GM12878 (cell line): ENCODE measurements at regions of chr15 and their contacts with region 1.

Region 1: DNA sequence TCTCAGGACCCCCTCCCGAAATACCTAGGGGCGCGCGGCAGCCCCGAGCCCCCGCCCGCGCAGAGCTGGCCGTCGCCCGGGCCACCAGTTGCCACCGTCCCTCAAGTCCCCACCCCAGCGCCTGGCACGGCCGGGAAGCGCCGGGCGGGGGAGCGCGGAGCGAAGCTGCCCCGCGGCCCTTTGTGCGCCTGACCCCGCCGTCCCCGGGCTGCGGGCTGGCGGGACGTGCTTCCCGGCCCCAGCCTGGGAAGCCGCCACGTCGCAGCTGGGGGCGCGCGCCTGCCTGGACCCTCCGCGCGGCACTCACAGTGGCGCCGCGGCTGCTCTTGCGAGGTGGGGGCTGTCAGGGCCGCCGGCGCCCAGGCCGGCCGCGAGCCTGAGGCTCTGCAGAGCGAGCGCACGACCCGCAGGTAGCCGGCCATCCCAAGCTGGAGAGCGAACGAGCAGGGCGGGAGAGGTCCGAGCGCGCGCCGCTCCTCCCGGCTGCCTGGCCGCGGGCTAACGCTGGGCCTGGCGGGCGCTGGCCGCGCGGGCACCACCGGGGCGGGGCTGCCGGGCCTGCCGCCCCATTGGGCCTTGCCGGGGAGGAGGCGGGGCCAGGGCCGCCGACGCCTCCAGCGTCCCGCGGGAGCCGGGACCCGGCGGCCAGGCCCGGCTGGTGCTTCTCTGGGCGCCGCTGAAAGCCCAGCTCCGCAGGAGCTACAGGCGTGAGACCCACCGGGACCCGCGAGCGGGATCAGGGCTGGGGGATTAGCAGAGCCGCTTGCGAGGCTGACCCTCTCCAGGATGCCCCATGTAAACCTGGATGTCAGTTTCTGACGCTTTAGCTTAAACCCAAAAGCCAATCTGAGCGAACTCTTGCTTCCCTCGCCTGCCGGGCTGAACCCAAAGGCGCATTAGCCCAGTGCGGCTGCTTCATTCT is at the start of gene IDH2:
- DNase-seq: no peak
- ATAC-seq: peak; percentile 76
- H3K4me3 ChIP-seq: peak within 1 kb of the TSS; percentile 79
- H3K27ac ChIP-seq: peak within 1 kb of the TSS; percentile 91
- H3K4me1 ChIP-seq: peaks cover 34% of the 10 kb centered on the region
- H3K27me3 ChIP-seq: no peaks in the 10 kb centered on the region
- CTCF ChIP-seq: no peak
- EP300 ChIP-seq: no peak
- POLR2A ChIP-seq: peak; percentile 91
- RAD21 ChIP-seq: no peak
- polyA plus RNA-seq, gene IDH2: 2.3 to 15.4 TPM

Region 2: DNA sequence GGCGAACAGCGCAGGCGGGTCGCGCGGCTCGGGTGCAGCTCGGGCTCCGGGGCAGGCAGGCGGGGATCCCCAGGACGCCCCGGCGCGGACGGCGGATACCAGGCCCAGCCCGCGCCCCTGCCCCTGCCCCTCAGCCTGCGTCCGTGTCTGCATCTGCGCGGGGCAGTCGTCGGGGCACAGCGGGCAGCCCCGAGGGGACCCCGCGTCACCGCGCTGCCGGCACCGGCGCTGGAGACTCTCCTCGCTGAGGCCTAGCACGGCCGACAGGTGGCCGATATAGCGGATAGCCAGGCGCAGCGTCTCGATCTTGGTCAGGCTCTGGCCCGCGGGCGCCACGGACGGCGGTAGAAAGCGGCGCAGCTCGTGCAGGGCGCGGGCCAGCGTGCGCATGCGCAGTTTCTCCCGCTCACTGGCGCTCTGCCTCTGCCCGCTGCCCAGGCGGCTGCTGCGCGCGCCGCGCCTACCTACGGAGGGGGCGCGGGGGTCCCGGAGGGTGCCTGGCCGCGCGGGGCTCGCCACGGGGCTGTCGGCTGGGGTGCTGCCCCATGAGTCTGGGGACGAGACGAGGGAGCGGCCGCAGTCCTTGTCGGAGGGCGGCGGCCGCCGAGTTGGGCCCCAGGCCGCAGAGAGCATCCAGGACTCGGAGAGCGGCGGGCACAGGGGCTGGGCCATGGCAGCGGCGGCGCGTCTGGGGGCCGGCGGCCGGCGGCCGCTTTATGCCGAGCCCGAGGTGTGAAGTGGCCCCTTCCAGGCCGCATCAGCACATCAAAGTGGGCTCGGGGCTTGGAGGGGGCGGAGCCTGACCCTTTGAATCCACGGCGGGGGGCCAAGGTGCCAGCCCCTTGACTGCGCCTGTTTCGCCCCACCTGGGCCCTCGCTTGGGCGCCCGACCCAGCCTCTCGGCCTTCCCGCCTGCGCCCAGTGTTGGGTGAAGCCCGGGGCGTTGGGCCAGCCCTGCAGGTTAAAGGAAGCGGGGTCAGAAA is 351.4 kb before region 1 on chr15 and contains the start of gene MESP1:
- CTCF ChIA-PET with region 1: no interaction called
- POLR2A ChIA-PET with region 1: no interaction called
- RAD21 ChIA-PET with region 1: interaction called, 4 read pairs
- SMC1A ChIA-PET with region 1: no interaction called
- in situ Hi-C with region 1: loop called (anchors 10 kb)
- intact Hi-C with region 1: no loop called
- DNase-seq: peak; percentile 51
- ATAC-seq: peak; percentile 98
- H3K4me3 ChIP-seq: peak within 1 kb of the TSS; percentile 65
- H3K27ac ChIP-seq: no peak within 1 kb of the TSS
- H3K4me1 ChIP-seq: peaks cover 9% of the 10 kb centered on the region
- H3K27me3 ChIP-seq: peaks cover 0 to 4% of the 10 kb centered on the region in 2 experiments; a peak in 2 of 4 replicates
- CTCF ChIP-seq: peak; percentile 52 to 76 (median 74)
- EP300 ChIP-seq: no peak
- POLR2A ChIP-seq: no peak; the same call in none of the 2 replicates
- RAD21 ChIP-seq: no peak; the same call in 1 of the 2 replicates
- polyA plus RNA-seq, gene MESP1: not detected

Region 3: DNA sequence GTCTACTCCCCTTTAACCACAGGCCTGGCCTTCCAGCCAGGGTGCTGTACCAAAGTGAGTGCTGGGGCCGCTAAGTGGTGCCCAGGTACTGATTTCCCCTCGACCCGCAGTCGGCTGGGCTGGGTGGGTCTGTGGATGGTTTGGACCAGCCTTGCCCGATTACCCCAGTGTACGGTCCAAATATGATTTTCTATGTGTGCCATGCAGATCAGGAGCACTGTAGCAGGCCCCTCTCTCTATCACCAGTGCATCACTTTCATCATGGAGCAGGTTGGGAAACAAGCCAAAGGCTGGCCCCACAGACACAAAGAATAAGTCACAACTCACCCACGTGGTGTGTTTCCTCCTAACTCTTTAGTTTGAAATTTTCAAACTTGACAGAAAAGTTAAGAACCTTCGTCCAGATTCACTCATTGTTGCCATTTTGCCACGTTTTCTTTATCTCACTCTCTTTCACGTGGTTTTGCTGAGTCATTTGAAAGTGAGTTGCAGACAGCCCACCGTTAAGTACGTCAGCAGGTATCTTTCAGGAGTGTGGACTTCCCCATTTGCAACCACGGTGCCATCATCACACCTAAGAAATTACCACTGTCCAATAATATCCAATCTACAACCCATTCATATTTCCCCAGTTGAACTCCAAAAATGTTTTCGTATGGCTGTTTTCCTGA is 64.1 kb before region 1 on chr15:
- CTCF ChIA-PET with region 1: interaction called, 4 read pairs
- POLR2A ChIA-PET with region 1: interaction called, 3 read pairs
- RAD21 ChIA-PET with region 1: interaction called, 3 read pairs
- SMC1A ChIA-PET with region 1: interaction called, 5 read pairs
- in situ Hi-C with region 1: no loop called
- intact Hi-C with region 1: loop called (anchors 5 kb)
- DNase-seq: peak; percentile 89
- ATAC-seq: peak; percentile 87
- H3K4me3 ChIP-seq: no peak overlapping the region
- H3K27ac ChIP-seq: peak overlapping the region; percentile 87
- H3K4me1 ChIP-seq: peaks cover 56% of the 10 kb centered on the region
- H3K27me3 ChIP-seq: no peaks in the 10 kb centered on the region
- CTCF ChIP-seq: no peak
- EP300 ChIP-seq: peak; percentile 99 to 100
- POLR2A ChIP-seq: no peak
- RAD21 ChIP-seq: no peak

Region 4: DNA sequence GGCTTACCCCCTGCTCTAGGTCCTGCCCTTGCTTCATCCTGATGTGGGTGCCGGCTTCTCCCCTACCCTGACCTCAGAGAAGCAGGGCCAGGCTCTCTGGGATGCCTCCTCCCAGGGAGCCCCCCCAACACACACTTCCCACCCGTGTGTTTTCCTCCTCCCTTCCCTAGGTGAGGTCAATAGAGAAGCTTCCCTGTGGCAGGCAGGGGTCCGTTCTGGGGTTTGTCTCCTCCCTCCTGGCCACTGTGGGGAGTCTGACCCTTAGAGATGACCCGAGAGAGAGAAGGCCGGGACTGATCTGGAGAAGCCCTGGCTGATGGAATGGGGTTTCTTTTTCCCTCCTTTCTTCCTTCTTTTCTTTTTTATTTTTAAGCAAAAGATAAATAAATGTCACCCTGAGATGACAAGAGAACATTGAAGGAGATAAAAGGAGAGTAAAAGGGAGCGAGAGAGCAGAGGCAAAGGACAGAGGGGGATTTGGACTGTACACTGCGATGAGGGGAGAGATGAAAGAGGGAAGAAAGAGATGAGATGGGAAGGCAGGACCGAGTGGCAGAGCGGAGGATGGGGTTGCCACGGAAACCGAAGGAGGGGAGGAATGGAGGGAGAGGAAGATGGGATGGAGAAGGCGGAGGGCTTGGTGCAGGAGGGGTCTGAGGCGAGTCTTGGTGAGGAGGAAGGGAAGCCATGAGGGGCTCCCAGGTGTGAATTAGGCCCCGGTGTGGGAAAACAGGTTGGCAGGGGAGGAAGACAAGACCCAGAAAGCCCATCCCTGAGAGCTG is 48.4 kb before region 1 on chr15:
- CTCF ChIA-PET with region 1: no interaction called
- POLR2A ChIA-PET with region 1: no interaction called
- RAD21 ChIA-PET with region 1: no interaction called
- SMC1A ChIA-PET with region 1: no interaction called
- in situ Hi-C with region 1: no loop called
- intact Hi-C with region 1: no loop called
- DNase-seq: no peak
- ATAC-seq: no peak
- H3K4me3 ChIP-seq: no peak overlapping the region
- H3K27ac ChIP-seq: no peak overlapping the region
- H3K4me1 ChIP-seq: peaks cover 13% of the 10 kb centered on the region
- H3K27me3 ChIP-seq: no peaks in the 10 kb centered on the region
- CTCF ChIP-seq: no peak
- EP300 ChIP-seq: no peak
- POLR2A ChIP-seq: no peak
- RAD21 ChIP-seq: no peak

Region 5: DNA sequence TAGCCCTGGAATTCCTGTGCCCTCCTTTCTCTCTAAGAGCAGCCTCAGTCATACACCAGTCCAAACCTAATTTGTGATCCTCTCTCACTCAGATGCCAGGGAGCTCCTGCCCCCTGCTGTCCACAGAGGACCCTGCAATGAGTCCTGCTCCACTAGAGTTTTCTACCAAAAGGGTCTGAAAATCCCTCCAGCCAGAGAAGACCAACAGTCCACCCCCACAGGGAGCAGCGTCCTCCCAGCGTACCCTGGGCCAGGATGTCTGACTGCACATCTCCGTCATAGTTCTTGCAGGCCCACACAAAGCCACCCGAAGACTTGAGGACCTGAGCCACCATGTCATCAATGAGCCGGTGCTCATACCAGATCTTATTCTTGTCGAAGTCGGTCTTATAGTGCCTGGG is 15.4 kb before region 1 on chr15:
- CTCF ChIA-PET with region 1: interaction called, 13 read pairs
- POLR2A ChIA-PET with region 1: interaction called, 8 read pairs
- RAD21 ChIA-PET with region 1: interaction called, 4 read pairs
- SMC1A ChIA-PET with region 1: no interaction called
- in situ Hi-C with region 1: no loop called
- intact Hi-C with region 1: no loop called
- DNase-seq: no peak
- ATAC-seq: peak; percentile 88
- H3K4me3 ChIP-seq: no peak overlapping the region
- H3K27ac ChIP-seq: no peak overlapping the region
- H3K4me1 ChIP-seq: no peaks in the 10 kb centered on the region
- H3K27me3 ChIP-seq: no peaks in the 10 kb centered on the region
- CTCF ChIP-seq: peak; percentile 79 to 87 (median 86)
- EP300 ChIP-seq: no peak
- POLR2A ChIP-seq: no peak
- RAD21 ChIP-seq: peak; percentile 79

Region 6: DNA sequence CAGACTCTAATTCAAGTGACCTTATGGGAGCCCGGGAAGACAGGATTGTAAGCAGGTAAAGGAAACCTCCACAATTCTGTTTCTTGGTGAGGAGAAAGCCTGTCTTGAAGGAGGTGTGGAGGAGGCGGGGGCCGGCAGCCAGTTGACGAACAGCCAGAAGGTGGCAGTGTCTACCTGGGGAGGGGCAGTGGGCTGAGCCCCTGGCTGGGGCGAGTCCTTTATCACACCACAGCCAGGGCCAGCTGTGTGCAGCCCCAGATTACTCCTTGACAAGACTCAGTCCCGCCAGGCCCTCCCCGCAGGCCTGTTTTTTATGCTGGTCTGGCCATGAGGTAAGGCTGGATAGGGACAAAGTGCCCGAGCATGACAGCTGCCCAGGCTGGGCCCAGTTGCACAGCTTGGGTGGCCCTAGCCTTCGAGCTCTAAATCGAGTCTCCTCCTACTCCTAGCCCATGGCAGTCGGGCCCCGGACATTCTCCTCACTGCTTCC is 41.0 kb after region 1 on chr15:
- CTCF ChIA-PET with region 1: interaction called, 10 read pairs
- POLR2A ChIA-PET with region 1: interaction called, 10 read pairs
- RAD21 ChIA-PET with region 1: interaction called, 5 read pairs
- SMC1A ChIA-PET with region 1: interaction called, 4 read pairs
- in situ Hi-C with region 1: no loop called
- intact Hi-C with region 1: no loop called
- DNase-seq: no peak
- ATAC-seq: peak; percentile 97
- H3K4me3 ChIP-seq: no peak overlapping the region
- H3K27ac ChIP-seq: no peak overlapping the region
- H3K4me1 ChIP-seq: peaks cover 5% of the 10 kb centered on the region
- H3K27me3 ChIP-seq: no peaks in the 10 kb centered on the region
- CTCF ChIP-seq: peak; percentile 75 to 83 (median 83)
- EP300 ChIP-seq: no peak
- POLR2A ChIP-seq: no peak
- RAD21 ChIP-seq: peak; percentile 83

Region 7: GRCh38 chr15:90149609-90150340 is 47.5 kb after region 1 on chr15:
- CTCF ChIA-PET with region 1: interaction called, 7 read pairs
- POLR2A ChIA-PET with region 1: interaction called, 10 read pairs
- RAD21 ChIA-PET with region 1: interaction called, 3 read pairs
- SMC1A ChIA-PET with region 1: interaction called, 3 read pairs
- in situ Hi-C with region 1: no loop called
- intact Hi-C with region 1: no loop called
- DNase-seq: no peak
- ATAC-seq: no peak; the same call in 2 of the 3 replicates
- H3K4me3 ChIP-seq: no peak overlapping the region
- H3K27ac ChIP-seq: 0 out of 2 replicates have a peak overlapping the region, but pooled peaks have one; percentile 20
- H3K4me1 ChIP-seq: peaks cover 17% of the 10 kb centered on the region
- H3K27me3 ChIP-seq: no peaks in the 10 kb centered on the region
- CTCF ChIP-seq: no peak
- EP300 ChIP-seq: no peak
- POLR2A ChIP-seq: no peak
- RAD21 ChIP-seq: no peak

Region 8: GRCh38 chr15:90465923-90466567 is 363.8 kb after region 1 on chr15:
- CTCF ChIA-PET with region 1: no interaction called
- POLR2A ChIA-PET with region 1: no interaction called
- RAD21 ChIA-PET with region 1: no interaction called
- SMC1A ChIA-PET with region 1: no interaction called
- in situ Hi-C with region 1: no loop called
- intact Hi-C with region 1: no loop called
- DNase-seq: no peak
- ATAC-seq: no peak
- H3K4me3 ChIP-seq: no peak overlapping the region
- H3K27ac ChIP-seq: no peak overlapping the region
- H3K4me1 ChIP-seq: peaks cover 3% of the 10 kb centered on the region; the same call in 1 of the 2 replicates
- H3K27me3 ChIP-seq: no peaks in the 10 kb centered on the region
- CTCF ChIP-seq: no peak
- EP300 ChIP-seq: no peak
- POLR2A ChIP-seq: no peak
- RAD21 ChIP-seq: no peak